SK-N-SH (cell line): ENCODE measurements at regions of chr1 and their contacts with region 1.

Region 1: DNA sequence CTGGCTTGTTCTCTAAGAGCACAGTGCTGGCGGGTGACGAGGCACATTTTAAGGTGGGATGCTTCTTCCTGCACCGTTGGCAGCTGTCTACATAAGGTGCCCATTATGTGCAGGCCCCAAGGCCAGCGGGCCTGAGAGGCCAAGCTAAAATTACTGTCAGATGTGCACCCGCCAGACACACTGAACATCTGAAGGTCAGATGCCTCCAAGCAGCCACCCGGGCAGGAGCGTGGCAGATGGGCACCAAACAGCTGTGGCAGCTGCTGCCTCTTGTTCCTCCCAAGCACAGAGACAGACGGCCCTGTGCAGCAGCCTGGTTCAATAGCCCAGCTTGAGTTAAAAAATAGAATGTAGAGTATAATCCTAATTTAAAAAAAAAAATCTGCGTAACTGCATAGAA is 211.9 kb upstream of the EDN2 start:
- DNase-seq: peak; percentile 86
- H3K4me3 ChIP-seq: no peak overlapping the region
- H3K27ac ChIP-seq: peak overlapping the region in 1 of 2 experiments; percentile 94; a peak in 2 of 4 replicates
- H3K4me1 ChIP-seq: peaks cover 0 to 47% of the 10 kb centered on the region in 2 experiments; a peak in 2 of 4 replicates
- H3K27me3 ChIP-seq: no peaks in the 10 kb centered on the region
- CTCF ChIP-seq: no peak
- EP300 ChIP-seq: peak in 1 of 2 experiments; percentile 65; a peak in 1 of 4 replicates
- RAD21 ChIP-seq: no peak

Region 2: DNA sequence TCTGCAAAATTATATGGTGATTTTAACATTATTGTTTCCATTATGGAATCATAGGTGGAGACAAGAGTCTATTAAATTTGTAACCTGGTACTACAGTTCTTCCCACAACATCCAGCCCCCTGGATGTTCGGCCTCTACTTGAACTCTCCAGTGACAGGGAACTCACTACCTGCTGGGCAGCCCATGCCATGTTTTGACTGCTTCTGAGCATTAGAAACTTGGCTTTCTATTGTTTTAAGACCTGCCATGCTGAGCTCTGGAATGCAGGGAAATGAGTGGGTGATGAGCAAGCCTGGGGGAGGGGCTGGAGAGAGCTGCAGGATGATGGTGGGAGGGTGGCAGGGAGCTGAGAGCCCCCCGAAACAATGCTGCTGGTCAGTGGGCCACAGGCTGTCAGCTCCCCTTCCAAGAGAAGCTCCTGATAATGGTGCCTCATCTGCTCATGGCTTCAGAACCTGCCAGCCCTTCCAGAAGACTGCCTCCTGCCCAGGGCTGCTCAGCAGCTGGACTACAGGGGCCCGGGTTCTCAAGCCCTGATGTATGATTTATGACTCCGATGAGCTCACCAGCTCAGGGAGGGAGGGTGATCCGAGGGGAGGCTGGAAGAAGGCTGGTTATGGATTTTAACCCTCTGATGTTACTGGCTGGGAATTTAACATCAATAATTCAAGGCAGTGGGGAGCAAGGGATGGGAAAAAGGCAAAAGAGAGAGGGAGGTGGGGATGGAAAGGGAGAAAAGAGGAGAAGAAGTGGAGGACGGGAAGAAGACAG is 17.4 kb after region 1 on chr1:
- CTCF ChIA-PET with region 1: interaction called, 5 read pairs
- POLR2A ChIA-PET with region 1: interaction called, 10 read pairs
- DNase-seq: peak; percentile 74
- H3K4me3 ChIP-seq: 0 out of 4 replicates have a peak overlapping the region, but pooled peaks of 1 of the 2 experiments have one; percentile 29
- H3K27ac ChIP-seq: peak overlapping the region; percentile 82 to 96
- H3K4me1 ChIP-seq: peaks cover 24 to 79% of the 10 kb centered on the region in 2 experiments
- H3K27me3 ChIP-seq: no peaks in the 10 kb centered on the region
- CTCF ChIP-seq: no peak
- EP300 ChIP-seq: peak in 1 of 2 experiments; percentile 54; a peak in 2 of 4 replicates
- RAD21 ChIP-seq: no peak